ENCODE measurements at regions of chr21 and their contacts with region 1.

Region 1: GRCh38 chr21:32516756-32517649 is 68.3 kb downstream of the TCP10L start:
- DNase-seq: no peak
- H3K4me3 ChIP-seq: no peak overlapping the region
- H3K27ac ChIP-seq: peak overlapping the region; percentile 52
- H3K4me1 ChIP-seq: peaks cover 41% of the 10 kb centered on the region
- H3K27me3 ChIP-seq: no peaks in the 10 kb centered on the region
- CTCF ChIP-seq: no peak

Region 2: DNA sequence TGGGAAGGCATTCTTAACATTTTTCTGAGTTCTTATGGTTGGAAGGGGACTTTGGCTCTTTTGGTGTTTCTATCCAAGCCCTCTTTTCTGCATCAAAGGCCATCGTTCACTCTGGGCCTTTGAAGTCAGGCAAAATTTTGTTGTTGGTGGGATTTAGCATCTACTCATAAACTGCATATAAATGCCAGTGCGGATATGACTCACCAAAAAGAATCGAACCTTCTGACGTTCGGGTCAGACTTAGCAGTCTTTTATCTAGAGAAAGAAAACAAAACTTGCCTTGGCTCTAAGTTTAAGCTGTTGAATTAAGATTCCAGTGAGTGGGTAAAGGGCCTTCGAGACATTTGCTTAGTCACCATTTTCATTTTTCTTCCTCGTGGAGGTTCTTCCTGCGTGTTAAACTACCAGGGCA is 53.1 kb before region 1 on chr21:
- intact Hi-C with region 1: loop called (anchors 10 kb)
- DNase-seq: no peak
- H3K4me3 ChIP-seq: no peak overlapping the region
- H3K27ac ChIP-seq: peak overlapping the region; percentile 0
- H3K4me1 ChIP-seq: peaks cover 14% of the 10 kb centered on the region
- H3K27me3 ChIP-seq: no peaks in the 10 kb centered on the region
- CTCF ChIP-seq: no peak